ENCODE measurements at regions of chr2 and their contacts with region 1.

Region 1: GRCh38 chr2:149561309-149561926 is 26.2 kb downstream of the MMADHC start:
- DNase-seq: no peak
- H3K4me3 ChIP-seq: no peak overlapping the region
- H3K27ac ChIP-seq: no peak overlapping the region
- H3K4me1 ChIP-seq: no peaks in the 10 kb centered on the region
- H3K27me3 ChIP-seq: no peaks in the 10 kb centered on the region
- CTCF ChIP-seq: peak; percentile 53 to 65 (median 63)
- EP300 ChIP-seq: no peak
- POLR2A ChIP-seq: no peak

Region 2: GRCh38 chr2:149017116-149017985 is 544.1 kb before region 1 on chr2:
- intact Hi-C with region 1: loop called (anchors 5 to 10 kb)
- DNase-seq: peak; percentile 43 to 75 (median 73)
- H3K4me3 ChIP-seq: no peak overlapping the region
- H3K27ac ChIP-seq: no peak overlapping the region
- H3K4me1 ChIP-seq: no peaks in the 10 kb centered on the region
- H3K27me3 ChIP-seq: no peaks in the 10 kb centered on the region
- CTCF ChIP-seq: peak; percentile 37 to 70 (median 67)
- EP300 ChIP-seq: no peak
- POLR2A ChIP-seq: no peak

Region 3: DNA sequence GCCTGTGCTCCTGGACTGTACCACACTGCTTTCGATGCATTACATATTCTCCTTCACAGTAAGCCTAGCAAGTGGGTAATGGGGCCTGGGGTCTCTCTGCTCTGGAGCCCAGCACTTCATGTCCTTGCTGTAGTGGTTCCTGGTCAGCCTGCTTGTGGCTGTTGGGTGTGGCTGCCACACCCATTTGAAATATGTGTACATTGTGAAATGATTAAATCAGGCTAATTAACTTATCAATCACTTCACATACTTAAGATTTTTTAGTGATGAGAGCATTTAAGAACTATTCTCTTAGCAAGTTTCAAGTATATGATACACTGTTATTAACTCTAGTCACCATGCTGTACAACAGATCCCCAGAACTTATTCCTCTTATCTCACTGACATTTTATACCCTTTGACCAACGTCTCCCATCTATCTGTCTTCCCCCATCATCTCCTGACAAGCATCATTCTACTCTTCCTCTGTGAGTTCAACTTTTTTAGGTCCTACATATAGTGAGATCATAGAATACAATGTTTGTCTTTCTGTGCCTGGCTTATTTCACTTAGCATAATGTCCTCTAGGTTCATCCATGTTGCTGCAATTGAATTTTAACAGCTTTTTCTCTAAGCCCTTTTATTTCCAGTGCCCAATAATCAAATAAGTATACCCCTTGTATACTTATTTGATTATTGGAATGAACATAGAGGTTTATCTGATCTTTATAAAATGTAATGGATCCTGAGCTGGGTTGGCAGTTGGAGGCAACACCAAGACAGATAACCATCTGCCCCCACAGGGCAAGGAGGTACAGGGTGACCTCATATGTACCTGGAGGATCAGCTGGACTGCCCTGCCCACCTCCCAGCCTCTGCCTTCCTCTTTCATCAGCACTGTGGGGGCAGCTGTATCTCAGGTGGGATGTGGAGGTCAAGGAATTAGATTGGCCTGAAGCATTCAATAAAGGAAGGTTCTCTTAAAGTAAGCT is 138.8 kb before region 1 on chr2:
- intact Hi-C with region 1: no loop called
- DNase-seq: no peak
- H3K4me3 ChIP-seq: no peak overlapping the region
- H3K27ac ChIP-seq: no peak overlapping the region
- H3K4me1 ChIP-seq: no peaks in the 10 kb centered on the region
- H3K27me3 ChIP-seq: no peaks in the 10 kb centered on the region
- CTCF ChIP-seq: no peak
- EP300 ChIP-seq: no peak
- POLR2A ChIP-seq: no peak

Region 4: GRCh38 chr2:149679286-149679685 is 117.9 kb after region 1 on chr2:
- intact Hi-C with region 1: no loop called
- DNase-seq: no peak
- H3K4me3 ChIP-seq: no peak overlapping the region
- H3K27ac ChIP-seq: no peak overlapping the region
- H3K4me1 ChIP-seq: no peaks in the 10 kb centered on the region
- H3K27me3 ChIP-seq: no peaks in the 10 kb centered on the region
- CTCF ChIP-seq: no peak
- EP300 ChIP-seq: no peak
- POLR2A ChIP-seq: no peak

Measured in ovary (tissue), 10 donors.